KBM-7 (cell line): ENCODE measurements at regions of chr1 and their contacts with region 1.

Region 1: GRCh38 chr1:182789138-182790076 is at the start of gene NPL:
- DNase-seq: peak; percentile 83

Region 2: DNA sequence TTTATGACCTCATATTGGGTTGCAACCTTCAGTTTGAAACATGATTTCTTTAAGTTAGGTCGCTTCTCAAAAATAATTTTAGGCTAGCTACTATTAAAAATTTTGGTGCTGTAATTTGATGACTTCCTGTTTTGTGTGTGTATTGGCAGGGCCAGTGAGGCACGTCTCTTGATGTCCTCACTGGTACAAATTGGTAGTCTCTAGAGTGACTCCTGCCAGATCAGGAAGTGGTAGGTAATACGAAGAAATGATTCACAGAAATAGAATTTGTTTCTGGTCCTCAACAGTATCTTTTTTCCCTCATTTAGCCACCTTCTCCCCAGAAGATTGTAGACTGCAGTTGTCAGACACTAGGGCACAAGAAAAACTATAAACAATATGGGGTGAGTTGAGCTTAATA is 1997.6 kb before region 1 on chr1:
- in situ Hi-C with region 1: no loop called
- DNase-seq: peak; percentile 50

Region 3: GRCh38 chr1:182084487-182085316 is 704.7 kb before region 1 on chr1:
- in situ Hi-C with region 1: loop called (anchors 25 kb)
- DNase-seq: peak; percentile 89

Region 4: DNA sequence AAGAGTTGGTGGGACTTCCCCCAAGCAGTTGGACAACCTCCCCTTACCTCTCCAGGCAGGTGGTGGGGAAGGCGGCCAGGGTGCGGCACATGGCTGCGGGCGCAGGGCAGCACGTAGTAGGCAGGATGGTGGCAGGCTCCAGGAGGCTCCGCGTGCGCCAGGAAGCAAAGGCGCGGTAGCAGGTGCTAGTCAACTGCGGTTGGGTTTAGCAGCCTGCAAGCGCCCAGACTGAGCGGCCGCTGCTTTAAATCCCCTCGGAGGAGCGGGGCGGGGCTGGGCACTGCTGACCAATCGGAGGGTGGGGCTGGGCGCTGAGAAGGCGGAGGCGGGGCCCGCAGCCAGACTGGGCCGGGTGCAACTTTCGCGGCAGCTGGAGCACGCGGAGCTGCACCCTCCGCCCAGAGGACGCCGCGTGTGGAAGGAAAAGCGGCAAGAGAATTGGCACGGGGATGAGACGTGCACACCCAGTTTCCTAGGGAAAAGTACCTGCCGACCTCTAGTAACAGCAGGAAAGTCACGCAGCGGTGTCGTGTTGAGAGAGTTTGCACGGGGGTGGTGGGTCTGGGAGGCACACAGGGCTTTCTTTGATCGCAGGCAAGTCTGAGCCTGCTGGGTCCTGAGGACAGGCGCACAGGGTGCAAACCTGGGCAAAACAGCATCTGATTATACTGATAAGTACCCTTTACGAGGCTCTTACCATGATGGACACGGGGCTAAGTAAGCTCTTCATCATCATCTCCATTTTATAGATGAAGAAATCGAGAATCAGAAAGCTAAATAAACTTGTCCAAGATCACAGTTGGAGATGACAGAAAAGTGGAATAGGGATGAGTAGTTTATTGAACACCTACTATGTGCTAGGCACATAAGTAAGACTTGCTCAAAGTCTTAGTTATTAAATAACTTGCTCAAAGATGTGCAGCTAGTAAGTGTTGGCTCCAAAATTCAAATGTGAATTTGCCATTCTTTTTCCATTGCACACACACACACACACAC is 184.9 kb before region 1 on chr1 and contains the start of gene RGS16:
- in situ Hi-C with region 1: loop called (anchors 10 kb)
- DNase-seq: peak; percentile 88